Activated naive CD8-positive, alpha-beta T cell treated with anti-CD3 and anti-CD28 coated beads, Interleukin-2, amount 10 ng/mL, durations not matched to agents 7 days and 5 days (primary cell): ENCODE measurements at regions of chr5 and their contacts with region 1.

Region 1: GRCh38 chr5:14581333-14581890 is at the start of gene OTULINL:
- DNase-seq: peak; percentile 94
- ATAC-seq: peak; percentile 88
- H3K4me3 Mint-ChIP-seq: peak within 1 kb of the TSS; percentile 91
- H3K27ac Mint-ChIP-seq: peak within 1 kb of the TSS; percentile 88
- H3K4me1 Mint-ChIP-seq: peaks cover 32% of the 10 kb centered on the region
- H3K27me3 Mint-ChIP-seq: peaks cover 15% of the 10 kb centered on the region
- total RNA-seq, gene OTULINL: 67.7 to 68.4 TPM

Region 2: DNA sequence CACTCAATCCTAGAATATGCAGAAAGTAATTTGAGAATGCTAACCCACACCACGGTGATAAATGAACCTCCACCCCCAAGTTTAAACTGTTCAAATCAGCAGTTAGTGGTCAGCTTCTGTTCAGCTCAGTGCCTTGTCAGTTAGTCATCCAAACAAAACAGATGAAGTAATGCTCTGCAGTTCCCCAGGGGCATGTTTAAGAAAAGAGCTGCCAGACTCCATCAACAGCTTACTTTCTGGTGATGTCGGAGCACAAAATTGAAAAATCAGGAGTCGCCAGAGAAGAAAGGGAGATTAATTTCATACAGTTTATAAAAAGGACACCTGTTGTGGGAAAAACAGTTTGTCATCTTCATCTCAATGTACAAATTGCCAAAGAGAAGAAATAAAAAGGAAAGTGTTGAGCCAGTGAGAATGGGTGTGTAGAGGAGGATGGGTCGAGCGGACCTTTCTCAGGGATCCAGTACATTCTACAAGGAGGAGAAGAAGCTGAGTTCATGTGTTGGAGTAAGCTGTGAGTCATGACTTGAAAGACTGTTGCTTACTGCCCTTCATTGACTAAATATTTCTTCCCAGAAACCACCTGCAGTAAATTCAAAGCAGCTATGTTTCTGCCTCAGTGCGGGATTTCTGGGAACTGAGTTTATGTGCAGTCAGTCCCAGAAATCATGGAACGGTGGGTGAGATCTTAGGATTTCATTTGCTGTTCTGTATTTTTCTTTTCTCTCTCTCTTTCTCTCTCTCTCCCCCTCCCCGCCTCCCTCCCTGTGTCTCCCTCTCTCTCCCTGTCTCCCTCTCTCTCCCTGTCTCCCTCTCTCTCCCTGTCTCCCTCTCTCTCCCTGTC is 424.5 kb before region 1 on chr5:
- POLR2A ChIA-PET with region 1: no interaction called
- DNase-seq: no peak
- ATAC-seq: no peak
- H3K4me3 Mint-ChIP-seq: no peak overlapping the region
- H3K27ac Mint-ChIP-seq: no peak overlapping the region
- H3K4me1 Mint-ChIP-seq: no peaks in the 10 kb centered on the region
- H3K27me3 Mint-ChIP-seq: peaks cover 9% of the 10 kb centered on the region

Region 3: GRCh38 chr5:14364576-14365472 is 216.6 kb before region 1 on chr5:
- POLR2A ChIA-PET with region 1: interaction called, 23 read pairs
- DNase-seq: no peak
- ATAC-seq: no peak
- H3K4me3 Mint-ChIP-seq: peak overlapping the region; percentile 56
- H3K27ac Mint-ChIP-seq: peak overlapping the region; percentile 89
- H3K4me1 Mint-ChIP-seq: peaks cover 52% of the 10 kb centered on the region
- H3K27me3 Mint-ChIP-seq: peaks cover 2% of the 10 kb centered on the region

Region 4: DNA sequence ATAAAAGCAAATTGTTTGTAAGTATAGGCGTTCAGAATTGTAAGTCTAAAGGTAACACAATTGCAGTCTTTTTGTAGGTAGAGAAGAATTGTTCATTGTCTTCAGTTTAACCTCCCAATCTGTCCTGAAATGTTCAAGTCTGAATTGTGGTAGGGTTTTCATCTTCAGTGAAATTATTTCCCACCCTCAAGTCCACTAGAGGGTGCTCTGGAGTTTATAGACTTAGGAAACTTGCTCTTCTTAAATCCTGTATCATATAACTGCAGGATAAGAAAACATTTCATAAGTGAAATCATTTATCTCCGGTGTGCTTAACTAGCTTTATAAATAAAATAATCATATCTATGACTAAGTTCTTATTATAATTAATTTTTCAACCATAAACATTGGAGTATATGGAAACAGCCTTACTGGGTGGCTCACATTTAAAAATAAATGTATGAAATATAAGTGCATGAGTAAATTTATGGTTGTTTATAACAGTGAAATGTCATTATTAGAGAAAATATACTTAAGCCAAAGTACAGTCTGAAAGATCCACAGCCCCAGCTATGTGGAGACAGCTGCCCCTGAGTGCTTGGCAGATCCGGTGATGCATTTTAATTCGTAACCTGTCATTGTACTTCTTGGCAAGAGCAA is 182.2 kb before region 1 on chr5:
- POLR2A ChIA-PET with region 1: interaction called, 13 read pairs
- DNase-seq: no peak
- ATAC-seq: peak; percentile 61
- H3K4me3 Mint-ChIP-seq: no peak overlapping the region
- H3K27ac Mint-ChIP-seq: no peak overlapping the region
- H3K4me1 Mint-ChIP-seq: peaks cover 46% of the 10 kb centered on the region
- H3K27me3 Mint-ChIP-seq: no peaks in the 10 kb centered on the region

Region 5: GRCh38 chr5:14415024-14415697 is 166.3 kb before region 1 on chr5:
- POLR2A ChIA-PET with region 1: interaction called, 32 read pairs
- DNase-seq: peak; percentile 50
- ATAC-seq: peak; percentile 58
- H3K4me3 Mint-ChIP-seq: peak overlapping the region; percentile 82
- H3K27ac Mint-ChIP-seq: peak overlapping the region; percentile 98
- H3K4me1 Mint-ChIP-seq: peaks cover 47% of the 10 kb centered on the region
- H3K27me3 Mint-ChIP-seq: no peaks in the 10 kb centered on the region

Region 6: GRCh38 chr5:14595189-14595588 is 13.8 kb after region 1 on chr5:
- POLR2A ChIA-PET with region 1: interaction called, 118 read pairs
- DNase-seq: no peak
- ATAC-seq: peak; percentile 78
- H3K4me3 Mint-ChIP-seq: peak overlapping the region; percentile 85
- H3K27ac Mint-ChIP-seq: peak overlapping the region; percentile 97
- H3K4me1 Mint-ChIP-seq: peaks cover 82% of the 10 kb centered on the region
- H3K27me3 Mint-ChIP-seq: no peaks in the 10 kb centered on the region

Region 7: GRCh38 chr5:14644623-14645237 is 63.3 kb after region 1 on chr5:
- POLR2A ChIA-PET with region 1: interaction called, 15 read pairs
- DNase-seq: no peak
- ATAC-seq: no peak
- H3K4me3 Mint-ChIP-seq: no peak overlapping the region
- H3K27ac Mint-ChIP-seq: no peak overlapping the region
- H3K4me1 Mint-ChIP-seq: peaks cover 12% of the 10 kb centered on the region
- H3K27me3 Mint-ChIP-seq: peaks cover 16% of the 10 kb centered on the region